Caco-2 (cell line): ENCODE measurements at regions of chr15 and their contacts with region 1.

Region 1: DNA sequence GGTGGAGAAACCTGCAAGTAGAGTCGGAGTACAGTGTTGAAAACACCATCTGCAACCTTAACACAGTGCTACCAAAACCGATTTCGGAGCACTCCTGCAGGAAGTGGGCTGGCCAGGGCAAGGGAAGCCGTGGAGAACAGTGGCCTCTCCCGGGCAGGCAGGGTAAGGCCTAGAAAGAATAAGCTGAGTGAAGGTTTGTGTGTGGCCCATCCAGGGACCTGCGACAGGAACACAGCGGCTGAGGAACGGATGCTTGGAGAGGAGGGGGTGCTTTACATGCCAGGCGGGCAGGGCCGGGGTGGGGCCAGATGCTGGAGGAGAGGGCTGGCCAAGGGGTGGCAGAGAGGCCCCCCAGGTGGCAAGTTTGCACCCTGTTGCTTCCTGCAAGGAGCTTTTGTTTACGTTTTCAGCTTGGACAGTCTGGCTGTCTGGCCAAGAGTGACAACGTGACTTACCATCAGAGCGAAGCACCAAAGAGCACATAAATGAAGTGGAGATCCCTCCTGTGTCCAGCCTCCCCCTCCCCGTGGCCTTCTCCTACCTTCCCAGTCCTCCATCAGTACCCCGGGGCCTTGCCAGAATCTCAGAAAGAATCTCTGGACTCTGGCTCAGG is 156.5 kb downstream of the PGPEP1L start:
- DNase-seq: peak; percentile 70 to 73
- H3K4me3 ChIP-seq: no peak overlapping the region
- H3K4me3 Mint-ChIP-seq: peak overlapping the region; percentile 79
- H3K27ac Mint-ChIP-seq: peak overlapping the region; percentile 22
- H3K4me1 ChIP-seq: peaks cover 10% of the 10 kb centered on the region
- H3K4me1 Mint-ChIP-seq: peaks cover 35% of the 10 kb centered on the region
- H3K27me3 ChIP-seq: no peaks in the 10 kb centered on the region
- H3K27me3 Mint-ChIP-seq: no peaks in the 10 kb centered on the region
- CTCF ChIP-seq: peak; percentile 53 to 74

Region 2: DNA sequence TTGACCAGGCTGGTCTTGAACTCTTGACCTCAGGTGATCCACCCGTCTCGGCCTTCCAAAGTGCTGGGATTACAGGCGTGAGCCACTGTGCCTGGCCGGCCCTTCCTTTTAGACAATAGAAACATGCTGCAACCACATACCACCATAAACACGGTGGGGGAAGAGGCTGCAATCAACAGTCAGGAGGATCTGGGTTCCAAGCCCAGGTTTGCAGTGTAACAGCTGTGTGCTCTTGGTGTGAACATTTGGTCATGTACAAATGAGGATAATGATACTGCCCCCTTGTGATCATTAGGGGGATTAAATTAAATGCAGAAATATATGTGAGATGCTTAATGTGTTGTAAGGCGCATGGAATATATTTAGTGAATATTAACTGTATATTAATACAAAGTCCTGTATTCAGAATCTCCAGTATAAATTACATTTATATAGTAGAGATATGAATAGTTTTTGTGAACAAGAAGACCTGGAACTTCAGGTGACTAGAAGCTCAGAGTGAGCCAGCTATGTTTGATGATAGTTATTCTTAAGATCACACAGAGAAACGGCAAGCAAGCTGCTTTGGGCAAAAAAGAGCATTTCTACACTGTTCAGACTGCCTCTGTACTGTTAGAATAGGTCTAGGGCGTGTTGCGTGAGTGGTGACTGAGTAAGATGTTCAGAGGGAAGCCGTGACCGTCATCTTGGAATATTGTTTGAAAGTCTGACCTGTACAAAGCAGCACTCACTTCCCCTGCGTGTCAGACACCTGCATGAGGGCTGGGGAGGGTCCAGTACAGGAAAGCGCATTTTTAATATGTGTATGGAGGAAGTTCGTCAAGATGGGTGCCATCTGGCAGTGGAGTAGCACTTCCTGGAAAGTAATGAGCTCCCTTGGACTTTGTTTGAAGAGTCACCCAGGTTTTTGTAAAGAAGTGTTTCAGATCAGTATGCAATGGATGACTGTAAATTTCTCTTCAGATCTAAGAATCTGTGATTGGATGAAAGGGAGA is 30.8 kb after region 1 on chr15:
- CTCF ChIA-PET with region 1: interaction called, 4 read pairs
- POLR2A ChIA-PET with region 1: no interaction called
- intact Hi-C with region 1: loop called (anchors 1 kb)
- DNase-seq: peak in 1 of 2 experiments; percentile 34
- H3K4me3 ChIP-seq: no peak overlapping the region
- H3K4me3 Mint-ChIP-seq: no peak overlapping the region
- H3K27ac Mint-ChIP-seq: no peak overlapping the region
- H3K4me1 ChIP-seq: peaks cover 12% of the 10 kb centered on the region
- H3K4me1 Mint-ChIP-seq: peaks cover 14% of the 10 kb centered on the region
- H3K27me3 ChIP-seq: no peaks in the 10 kb centered on the region
- H3K27me3 Mint-ChIP-seq: no peaks in the 10 kb centered on the region
- CTCF ChIP-seq: peak; percentile 28 to 51